Mammary epithelial cell (primary cell): ENCODE measurements at regions of chr1 and their contacts with region 1.

Region 1: GRCh38 chr1:167803358-167804207 is 81.8 kb downstream of the MPZL1 start:
- DNase-seq: peak; percentile 89
- H3K4me3 ChIP-seq: no peak overlapping the region
- H3K27ac ChIP-seq: no peak overlapping the region
- H3K4me1 ChIP-seq: peaks cover 25% of the 10 kb centered on the region
- H3K27me3 ChIP-seq: no peaks in the 10 kb centered on the region
- CTCF ChIP-seq: peak; percentile 98 to 99

Region 2: GRCh38 chr1:167491586-167492461 is 311.8 kb before region 1 on chr1:
- CTCF ChIA-PET with region 1: no interaction called
- dilution Hi-C with region 1: no loop called
- in situ Hi-C with region 1: no loop called
- intact Hi-C with region 1: no loop called
- DNase-seq: no peak
- H3K4me3 ChIP-seq: no peak overlapping the region
- H3K27ac ChIP-seq: no peak overlapping the region
- H3K4me1 ChIP-seq: no peaks in the 10 kb centered on the region
- H3K27me3 ChIP-seq: no peaks in the 10 kb centered on the region
- CTCF ChIP-seq: no peak

Region 3: DNA sequence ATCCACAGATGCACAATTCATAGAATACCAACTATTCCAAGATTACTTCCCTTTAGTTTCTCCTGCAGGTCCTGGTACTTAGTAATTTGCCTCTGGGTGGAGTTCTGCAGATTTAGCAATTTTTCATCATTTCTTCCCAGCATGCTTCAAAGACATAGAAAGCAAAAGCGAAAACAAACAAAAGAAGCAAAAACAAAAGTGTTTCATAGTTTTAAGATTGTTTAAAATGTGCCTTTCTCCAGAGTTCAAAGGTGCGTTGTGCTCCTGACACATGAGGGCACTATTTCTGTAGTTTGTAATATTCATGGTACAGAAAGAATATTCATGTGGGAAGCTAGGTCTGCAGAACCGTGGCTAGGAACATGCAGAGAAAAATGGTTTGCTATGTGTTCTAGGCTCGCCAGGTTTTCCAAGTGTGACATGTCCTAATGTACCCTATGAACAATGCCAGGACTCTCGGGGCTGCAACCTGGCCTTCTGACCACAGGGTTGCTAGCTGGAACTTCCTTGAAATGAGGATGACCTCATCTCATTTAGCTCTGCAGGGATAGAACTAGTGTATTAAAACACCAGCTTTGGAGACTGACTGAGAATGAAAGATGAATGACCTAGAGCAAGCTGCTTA is 203.5 kb before region 1 on chr1:
- CTCF ChIA-PET with region 1: no interaction called
- dilution Hi-C with region 1: loop called (anchors 10 kb)
- in situ Hi-C with region 1: no loop called
- intact Hi-C with region 1: loop called (anchors 1 kb)
- DNase-seq: peak; percentile 63
- H3K4me3 ChIP-seq: no peak overlapping the region
- H3K27ac ChIP-seq: no peak overlapping the region
- H3K4me1 ChIP-seq: peaks cover 18% of the 10 kb centered on the region
- H3K27me3 ChIP-seq: no peaks in the 10 kb centered on the region
- CTCF ChIP-seq: peak; percentile 59 to 64

Region 4: GRCh38 chr1:167715157-167715999 is 88.2 kb before region 1 on chr1:
- CTCF ChIA-PET with region 1: no interaction called
- dilution Hi-C with region 1: loop called (anchors 5 kb)
- in situ Hi-C with region 1: loop called (anchors 5 kb)
- intact Hi-C with region 1: loop called (anchors 1 kb)
- DNase-seq: peak; percentile 83
- H3K4me3 ChIP-seq: peak overlapping the region; percentile 79 to 85 (median 84)
- H3K27ac ChIP-seq: peak overlapping the region; percentile 89
- H3K4me1 ChIP-seq: peaks cover 13% of the 10 kb centered on the region
- H3K27me3 ChIP-seq: no peaks in the 10 kb centered on the region
- CTCF ChIP-seq: peak; percentile 88 to 99

Region 5: GRCh38 chr1:167721617-167722151 is 81.9 kb before region 1 on chr1 and contains the start of gene MPZL1:
- CTCF ChIA-PET with region 1: no interaction called
- dilution Hi-C with region 1: loop called (anchors 5 kb)
- in situ Hi-C with region 1: loop called (anchors 5 kb)
- intact Hi-C with region 1: loop called (anchors 1 kb)
- DNase-seq: peak; percentile 91
- H3K4me3 ChIP-seq: peak within 1 kb of the TSS; percentile 88 to 98 (median 94)
- H3K27ac ChIP-seq: peak within 1 kb of the TSS; percentile 66
- H3K4me1 ChIP-seq: peaks cover 42% of the 10 kb centered on the region
- H3K27me3 ChIP-seq: no peaks in the 10 kb centered on the region
- CTCF ChIP-seq: no peak
- total RNA-seq, gene MPZL1: 148 to 227 TPM

Region 6: DNA sequence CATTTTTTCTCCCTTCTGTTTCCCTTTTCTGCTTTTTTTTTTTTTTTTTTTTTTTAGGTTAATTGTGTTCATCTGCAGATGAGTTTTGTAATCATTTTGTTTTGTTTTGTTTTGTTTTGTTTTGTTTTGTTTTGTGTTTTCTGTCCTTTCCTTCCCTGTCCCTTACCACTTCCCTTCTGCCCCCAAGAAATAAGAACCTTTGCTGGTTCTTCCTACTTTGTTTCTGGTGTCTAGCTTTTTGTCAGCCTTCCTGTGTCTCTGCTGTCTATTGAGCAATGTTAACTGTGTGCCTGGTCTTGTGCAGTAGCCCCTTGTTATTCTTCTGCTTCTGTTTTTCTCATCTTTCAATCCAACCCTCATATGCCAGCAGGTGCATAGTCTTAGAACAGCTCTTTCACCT is 35.8 kb before region 1 on chr1:
- CTCF ChIA-PET with region 1: no interaction called
- dilution Hi-C with region 1: loop called (anchors 5 kb)
- in situ Hi-C with region 1: no loop called
- intact Hi-C with region 1: no loop called
- DNase-seq: no peak
- H3K4me3 ChIP-seq: no peak overlapping the region
- H3K27ac ChIP-seq: no peak overlapping the region
- H3K4me1 ChIP-seq: peaks cover 48% of the 10 kb centered on the region
- H3K27me3 ChIP-seq: no peaks in the 10 kb centered on the region
- CTCF ChIP-seq: no peak